Pancreas (tissue), 10 donors: ENCODE measurements at regions of chr1 and their contacts with region 1.

Region 1: DNA sequence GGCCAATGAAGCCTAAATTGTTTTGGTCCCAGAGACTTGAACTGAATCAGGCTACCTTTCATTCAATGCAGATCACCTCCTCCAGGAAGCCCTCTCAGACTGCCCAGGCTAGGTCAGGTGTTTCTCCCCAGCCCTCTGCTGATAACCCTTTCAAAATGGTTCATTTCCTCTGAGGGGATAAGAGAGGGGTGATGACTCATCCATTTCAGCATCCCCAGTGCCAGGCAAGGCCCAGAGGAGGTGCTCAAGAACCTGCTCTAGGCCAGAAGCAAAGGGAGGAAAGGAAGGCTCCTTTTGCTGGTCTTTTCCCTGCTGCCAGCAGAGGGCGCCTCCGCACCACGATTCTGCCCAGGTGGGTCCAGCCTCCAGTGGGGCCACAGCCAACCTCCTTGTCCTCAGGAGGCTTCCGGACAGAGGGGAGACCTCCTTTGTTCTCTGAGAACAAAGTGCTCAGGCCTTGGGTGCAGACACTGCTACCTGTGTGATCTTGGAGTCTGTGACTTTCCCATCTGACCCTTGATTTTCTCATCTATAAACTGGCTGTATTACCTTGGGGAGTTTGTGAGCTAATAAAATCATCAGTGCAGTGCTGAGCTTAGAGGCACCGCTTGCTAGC is 45.3 kb upstream of the ARHGEF10L start:
- DNase-seq: peak; percentile 29 to 89 (median 74)
- ATAC-seq: peak; percentile 84 to 96 (median 92)
- H3K4me3 ChIP-seq: no peak overlapping the region
- H3K27ac ChIP-seq: no peak overlapping the region
- H3K4me1 ChIP-seq: no peaks in the 10 kb centered on the region
- H3K27me3 ChIP-seq: no peaks in the 10 kb centered on the region
- CTCF ChIP-seq: peak; percentile 70 to 85 (median 83)

Region 2: GRCh38 chr1:17831619-17832018 is 337.4 kb after region 1 on chr1:
- intact Hi-C with region 1: loop called in 1 of 3 experiments (anchors 10 kb)
- DNase-seq: no peak
- ATAC-seq: peak in 1 of 4 donors; percentile 46
- H3K4me3 ChIP-seq: no peak overlapping the region
- H3K27ac ChIP-seq: no peak overlapping the region
- H3K4me1 ChIP-seq: no peaks in the 10 kb centered on the region
- H3K27me3 ChIP-seq: no peaks in the 10 kb centered on the region
- CTCF ChIP-seq: no peak

Region 3: DNA sequence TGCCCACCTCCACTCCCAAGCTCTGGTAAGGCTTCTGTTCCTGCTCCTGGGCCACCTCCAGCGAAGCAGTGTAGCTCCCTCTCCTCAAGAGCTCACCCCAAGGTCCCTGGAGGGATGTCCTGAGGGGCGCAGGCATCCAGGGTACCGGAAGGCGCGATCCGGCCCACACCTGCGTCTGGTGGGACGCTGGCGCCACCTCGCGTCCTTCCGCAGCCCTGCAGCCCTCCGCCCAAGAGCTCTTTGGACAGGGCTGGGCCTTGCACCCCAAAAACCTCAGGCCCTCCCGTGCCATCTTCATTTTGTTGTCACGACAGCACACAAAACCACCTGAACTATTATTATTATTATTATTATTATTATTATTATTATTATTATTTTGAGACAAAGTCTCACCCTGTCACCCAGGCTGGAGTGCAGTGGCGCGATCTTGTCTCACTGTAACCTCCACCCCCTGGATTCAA is 1087.2 kb after region 1 on chr1:
- intact Hi-C with region 1: loop called in 1 of 3 experiments (anchors 10 kb)
- DNase-seq: peak in 4 of 6 donors; percentile 60 to 85 (median 72)
- ATAC-seq: peak; percentile 76 to 87 (median 82)
- H3K4me3 ChIP-seq: no peak overlapping the region
- H3K27ac ChIP-seq: no peak overlapping the region
- H3K4me1 ChIP-seq: no peaks in the 10 kb centered on the region
- H3K27me3 ChIP-seq: no peaks in the 10 kb centered on the region
- CTCF ChIP-seq: peak; percentile 72 to 78 (median 74)